ENCODE measurements at regions of chr19 and their contacts with region 1.

Region 1: DNA sequence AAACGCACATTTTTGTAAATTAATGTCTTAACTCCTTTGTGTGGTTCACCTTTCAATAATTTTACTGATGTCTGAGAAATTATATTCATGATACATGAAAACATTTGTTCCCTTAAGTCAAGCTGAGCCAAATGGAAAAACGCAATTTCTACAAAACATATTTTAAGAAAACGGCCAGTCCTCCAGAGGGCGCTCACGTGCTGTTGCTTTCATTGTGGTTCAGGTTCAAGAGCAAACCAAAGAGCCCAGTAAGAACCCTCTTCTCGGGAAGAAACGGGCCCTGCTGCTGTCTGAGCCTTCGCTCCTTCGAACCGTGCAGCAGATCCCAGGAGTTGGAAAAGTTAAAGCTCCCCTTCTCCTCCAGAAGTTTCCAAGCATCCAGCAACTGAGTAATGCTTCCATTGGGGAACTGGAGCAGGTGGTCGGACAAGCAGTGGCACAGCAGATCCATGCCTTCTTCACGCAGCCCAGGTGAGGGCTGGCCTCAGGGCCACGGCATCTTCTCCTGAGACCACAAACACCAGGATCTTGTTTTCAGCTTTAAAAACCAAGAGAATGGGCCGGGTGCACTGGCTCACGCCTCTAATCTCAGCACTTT is 4.3 kb downstream of the FAAP24 start:
- DNase-seq: peak; percentile 82 to 85
- H3K4me3 ChIP-seq: no peak overlapping the region
- H3K27ac ChIP-seq: peak overlapping the region in 2 of 5 donors; percentile 9 to 41
- H3K4me1 ChIP-seq: peaks cover 5 to 23% (median 16%) of the 10 kb centered on the region in 4 donors
- H3K27me3 ChIP-seq: no peaks in the 10 kb centered on the region
- CTCF ChIP-seq: peak in 4 of 7 experiments; percentile 47 to 84 (median 68)
- EP300 ChIP-seq: no peak
- POLR2A ChIP-seq: no peak

Region 2: GRCh38 chr19:33118643-33119042 is 142.3 kb after region 1 on chr19:
- intact Hi-C with region 1: loop called (anchors 5 kb)
- DNase-seq: no peak
- H3K4me3 ChIP-seq: no peak overlapping the region
- H3K27ac ChIP-seq: no peak overlapping the region
- H3K4me1 ChIP-seq: no peaks in the 10 kb centered on the region
- H3K27me3 ChIP-seq: no peaks in the 10 kb centered on the region
- CTCF ChIP-seq: no peak
- EP300 ChIP-seq: no peak
- POLR2A ChIP-seq: no peak